Kidney (tissue), 22 donors: ENCODE measurements at regions of chr13 and their contacts with region 1.

Region 1: DNA sequence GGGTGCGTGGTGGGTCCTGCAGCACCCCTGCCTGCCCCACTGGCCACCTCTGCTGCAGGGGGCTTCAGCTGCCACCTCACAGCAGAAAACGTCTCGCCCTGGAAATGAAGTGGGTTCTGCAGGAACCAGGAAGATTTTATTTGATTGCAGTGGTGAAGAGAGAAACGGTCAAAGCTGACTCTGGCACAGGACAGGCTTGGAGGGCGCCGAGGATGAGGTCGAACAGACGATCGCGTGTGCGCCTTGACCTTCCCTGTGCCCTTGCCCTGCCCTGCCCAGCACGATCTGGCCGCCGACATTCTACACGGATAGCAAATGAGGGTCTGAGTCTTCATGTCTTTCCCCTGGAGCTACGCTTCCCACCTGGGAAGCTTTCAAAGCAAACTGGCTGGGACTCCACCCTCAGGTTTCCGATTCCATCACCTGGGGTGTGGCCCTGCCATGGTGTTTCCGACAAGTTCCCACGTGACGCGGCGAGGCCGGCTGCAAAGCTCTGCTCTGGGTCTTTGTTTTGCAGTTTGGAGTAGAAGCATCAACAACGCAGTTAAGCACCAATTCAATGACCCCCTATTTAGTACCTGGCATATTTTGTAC is 50.3 kb upstream of the TUBGCP3 start:
- DNase-seq: peak in 2 of 5 donors; percentile 39 to 60
- H3K4me3 ChIP-seq: no peak overlapping the region
- H3K27ac ChIP-seq: no peak overlapping the region
- H3K4me1 ChIP-seq: no peaks in the 10 kb centered on the region
- H3K27me3 ChIP-seq: no peaks in the 10 kb centered on the region
- CTCF ChIP-seq: no peak

Region 2: GRCh38 chr13:112873851-112874750 is 235.8 kb after region 1 on chr13:
- intact Hi-C with region 1: loop called (anchors 10 kb)
- DNase-seq: peak; percentile 83 to 93 (median 86)
- H3K4me3 ChIP-seq: no peak overlapping the region
- H3K27ac ChIP-seq: no peak overlapping the region
- H3K4me1 ChIP-seq: peaks cover 0 to 2% (median 0%) of the 10 kb centered on the region in 3 donors
- H3K27me3 ChIP-seq: no peaks in the 10 kb centered on the region
- CTCF ChIP-seq: peak; percentile 86

Region 3: DNA sequence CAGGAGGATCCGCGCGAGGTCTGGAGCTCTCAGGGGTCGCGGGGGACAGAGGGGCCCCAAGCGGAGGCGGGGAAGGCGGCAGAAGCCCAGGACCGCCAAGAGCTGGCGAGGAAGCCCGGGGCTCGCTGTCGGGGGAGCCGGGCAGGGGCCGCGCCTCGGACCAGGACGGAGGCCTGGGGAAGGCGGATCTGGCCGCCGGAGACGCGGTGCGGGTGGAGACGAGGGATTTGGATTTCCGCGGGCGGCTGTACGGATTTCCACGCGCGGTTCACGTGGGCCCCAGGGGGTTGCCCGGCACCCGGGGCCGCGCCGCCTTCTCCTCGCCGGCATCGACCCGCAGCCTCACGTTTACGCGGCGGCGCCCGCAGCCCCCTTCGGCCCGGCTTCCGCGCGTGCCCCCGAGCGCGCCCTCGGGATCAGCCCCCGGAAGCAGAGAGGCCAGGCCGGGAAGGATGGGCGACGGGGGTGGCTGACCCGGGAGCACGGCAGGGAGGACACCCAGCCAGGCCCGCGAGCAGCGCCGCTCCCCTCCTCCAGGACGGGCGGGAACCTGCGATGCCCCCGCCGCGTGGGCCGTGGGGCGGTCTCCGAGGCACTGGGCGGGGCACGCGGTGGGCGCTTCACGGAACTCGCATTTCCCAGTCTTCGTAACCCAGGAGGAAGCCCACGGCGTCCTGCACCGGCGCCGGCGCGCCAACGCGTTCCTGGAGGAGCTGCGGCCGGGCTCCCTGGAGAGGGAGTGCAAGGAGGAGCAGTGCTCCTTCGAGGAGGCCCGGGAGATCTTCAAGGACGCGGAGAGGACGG is 472.0 kb after region 1 on chr13:
- intact Hi-C with region 1: no loop called
- DNase-seq: peak; percentile 29 to 70 (median 53)
- H3K4me3 ChIP-seq: peak overlapping the region in 2 of 3 donors; percentile 18 to 37
- H3K27ac ChIP-seq: no peak overlapping the region
- H3K4me1 ChIP-seq: peaks cover 0 to 3% (median 0%) of the 10 kb centered on the region in 3 donors
- H3K27me3 ChIP-seq: no peaks in the 10 kb centered on the region
- CTCF ChIP-seq: no peak